ENCODE measurements at regions of chr4 and their contacts with region 1.

Region 1: GRCh38 chr4:26860157-26860921 is at the start of gene STIM2:
- DNase-seq: peak; percentile 96
- ATAC-seq: peak; percentile 79
- H3K4me3 Mint-ChIP-seq: peak within 1 kb of the TSS; percentile 91
- H3K27ac Mint-ChIP-seq: peak within 1 kb of the TSS; percentile 99
- H3K4me1 Mint-ChIP-seq: peaks cover 48% of the 10 kb centered on the region
- H3K27me3 Mint-ChIP-seq: no peaks in the 10 kb centered on the region
- CTCF ChIP-seq: peak; percentile 24
- total RNA-seq, gene STIM2: 44.4 to 46.6 TPM

Region 2: GRCh38 chr4:26459054-26459755 is 401.1 kb before region 1 on chr4:
- CTCF ChIA-PET with region 1: no interaction called
- POLR2A ChIA-PET with region 1: no interaction called
- intact Hi-C with region 1: loop called (anchors 10 kb)
- DNase-seq: no peak
- ATAC-seq: peak; percentile 67
- H3K4me3 Mint-ChIP-seq: peak overlapping the region; percentile 20
- H3K27ac Mint-ChIP-seq: no peak overlapping the region
- H3K4me1 Mint-ChIP-seq: peaks cover 16% of the 10 kb centered on the region
- H3K27me3 Mint-ChIP-seq: no peaks in the 10 kb centered on the region
- CTCF ChIP-seq: peak; percentile 33

Region 3: GRCh38 chr4:26873391-26874026 is 13.2 kb after region 1 on chr4:
- CTCF ChIA-PET with region 1: interaction called, 8 read pairs
- POLR2A ChIA-PET with region 1: interaction called, 20 read pairs
- intact Hi-C with region 1: no loop called
- DNase-seq: peak; percentile 93
- ATAC-seq: peak; percentile 95
- H3K4me3 Mint-ChIP-seq: peak overlapping the region; percentile 44
- H3K27ac Mint-ChIP-seq: peak overlapping the region; percentile 88
- H3K4me1 Mint-ChIP-seq: peaks cover 82% of the 10 kb centered on the region
- H3K27me3 Mint-ChIP-seq: no peaks in the 10 kb centered on the region
- CTCF ChIP-seq: no peak

Region 4: DNA sequence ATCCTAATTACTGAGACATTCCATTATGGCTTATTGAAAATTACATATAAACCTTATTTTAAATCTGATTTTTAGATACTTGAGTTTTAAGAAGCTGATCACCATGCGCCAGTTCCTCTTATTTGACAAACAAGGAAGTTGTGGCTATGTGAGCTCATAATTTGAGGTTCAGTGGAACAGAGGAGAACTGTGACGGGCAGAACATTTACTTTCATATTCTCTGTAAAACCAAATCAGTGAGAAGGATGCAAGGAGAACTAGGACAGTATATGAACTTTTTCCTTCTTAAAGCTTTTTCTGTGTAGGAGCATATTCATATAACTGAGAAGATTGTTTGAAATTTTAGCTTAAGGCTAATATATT is 25.6 kb after region 1 on chr4:
- CTCF ChIA-PET with region 1: interaction called, 15 read pairs
- POLR2A ChIA-PET with region 1: interaction called, 39 read pairs
- intact Hi-C with region 1: loop called (anchors 2 kb)
- DNase-seq: peak; percentile 58
- ATAC-seq: peak; percentile 52
- H3K4me3 Mint-ChIP-seq: peak overlapping the region; percentile 62
- H3K27ac Mint-ChIP-seq: peak overlapping the region; percentile 96
- H3K4me1 Mint-ChIP-seq: peaks cover 68% of the 10 kb centered on the region
- H3K27me3 Mint-ChIP-seq: no peaks in the 10 kb centered on the region
- CTCF ChIP-seq: no peak

Measured in activated CD8-positive, alpha-beta T cell treated with anti-CD3 and anti-CD28 coated beads for 36 hours (primary cell).